ENCODE measurements at regions of chr3 and their contacts with region 1.

Region 1: DNA sequence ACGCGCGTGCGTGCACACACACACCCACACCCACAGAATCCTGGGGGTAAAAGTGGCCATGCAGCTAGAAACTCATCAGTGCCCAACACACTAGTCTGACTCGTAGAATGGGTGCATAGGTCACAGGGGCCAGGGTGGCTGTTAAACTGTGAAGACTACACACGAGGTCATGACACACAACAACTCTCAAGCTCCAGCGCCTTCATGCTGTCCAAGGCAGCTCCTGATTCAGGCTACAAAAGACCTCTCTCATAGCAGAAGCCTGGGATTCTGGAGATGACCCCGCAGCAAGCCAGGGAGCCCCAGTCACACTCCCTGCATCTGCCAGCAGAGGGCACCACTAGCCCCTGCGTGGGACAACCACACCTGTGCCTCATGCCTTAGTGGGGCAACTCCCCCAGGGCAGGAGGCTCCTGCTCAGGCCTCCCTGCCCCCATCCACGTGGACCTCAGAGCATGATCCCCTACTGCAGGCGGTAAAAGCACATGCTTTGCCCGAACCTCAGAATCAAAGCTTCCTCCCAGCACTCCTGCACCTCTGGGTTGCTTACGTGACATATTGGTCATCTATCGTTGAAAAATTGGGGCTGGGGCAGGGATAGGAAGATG is 93.1 kb downstream of the LRIG1 start:
- DNase-seq: peak in 1 of 2 experiments; percentile 49
- H3K4me3 ChIP-seq: no peak overlapping the region
- H3K27ac ChIP-seq: no peak overlapping the region
- H3K4me1 ChIP-seq: peaks cover 4% of the 10 kb centered on the region; the same call in 1 of the 2 replicates
- H3K27me3 ChIP-seq: no peaks in the 10 kb centered on the region
- CTCF ChIP-seq: peak; percentile 84

Region 2: GRCh38 chr3:66107855-66108254 is 299.9 kb before region 1 on chr3:
- CTCF ChIA-PET with region 1: no interaction called
- POLR2A ChIA-PET with region 1: no interaction called
- intact Hi-C with region 1: no loop called
- DNase-seq: no peak
- H3K4me3 ChIP-seq: no peak overlapping the region
- H3K27ac ChIP-seq: no peak overlapping the region
- H3K4me1 ChIP-seq: no peaks in the 10 kb centered on the region
- H3K27me3 ChIP-seq: no peaks in the 10 kb centered on the region
- CTCF ChIP-seq: no peak

Region 3: GRCh38 chr3:66816090-66816761 is 408.5 kb after region 1 on chr3:
- CTCF ChIA-PET with region 1: no interaction called
- POLR2A ChIA-PET with region 1: no interaction called
- intact Hi-C with region 1: loop called (anchors 1 kb)
- DNase-seq: peak in 1 of 2 experiments; percentile 39
- H3K4me3 ChIP-seq: no peak overlapping the region
- H3K27ac ChIP-seq: no peak overlapping the region
- H3K4me1 ChIP-seq: no peaks in the 10 kb centered on the region
- H3K27me3 ChIP-seq: no peaks in the 10 kb centered on the region
- CTCF ChIP-seq: peak; percentile 70

Region 4: GRCh38 chr3:66989860-66990665 is 582.3 kb after region 1 on chr3:
- CTCF ChIA-PET with region 1: no interaction called
- POLR2A ChIA-PET with region 1: no interaction called
- intact Hi-C with region 1: no loop called
- DNase-seq: peak in 1 of 2 experiments; percentile 36
- H3K4me3 ChIP-seq: peak overlapping the region; percentile 44; the same call in 1 of the 2 replicates
- H3K27ac ChIP-seq: no peak overlapping the region
- H3K4me1 ChIP-seq: no peaks in the 10 kb centered on the region
- H3K27me3 ChIP-seq: peaks cover 12% of the 10 kb centered on the region; the same call in 1 of the 2 replicates
- CTCF ChIP-seq: no peak; the same call in 1 of the 2 replicates

Measured in PC-9 (cell line).